Colonic mucosa (tissue), 4 donors: ENCODE measurements at regions of chr1 and their contacts with region 1.

Region 1: DNA sequence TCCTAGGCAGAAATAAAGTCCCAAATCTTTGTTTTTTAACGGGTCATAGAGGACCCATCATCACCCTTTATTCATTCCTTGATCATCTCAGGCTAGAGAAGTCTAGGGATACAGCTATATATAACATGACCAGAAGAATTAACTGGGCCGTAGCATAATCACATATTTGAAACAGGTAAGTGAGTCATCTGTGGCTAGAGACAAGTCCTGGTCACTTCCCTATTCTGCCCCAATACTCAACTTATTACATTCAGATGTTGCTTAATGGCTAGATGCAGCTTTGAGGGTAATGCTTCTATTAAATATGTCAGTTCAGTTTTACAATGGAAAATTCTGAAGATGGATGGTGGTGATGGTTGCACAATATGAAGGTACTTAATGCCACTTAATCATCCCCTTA is 47.0 kb downstream of the EXO1 start:
- DNase-seq: no peak
- H3K4me3 ChIP-seq: no peak overlapping the region
- H3K27ac ChIP-seq: no peak overlapping the region
- H3K4me1 ChIP-seq: no peaks in the 10 kb centered on the region
- H3K27me3 ChIP-seq: no peaks in the 10 kb centered on the region
- CTCF ChIP-seq: no peak

Region 2: GRCh38 chr1:242017584-242018233 is 122.7 kb after region 1 on chr1:
- intact Hi-C with region 1: loop called (anchors 5 kb)
- DNase-seq: peak; percentile 57
- H3K4me3 ChIP-seq: no peak overlapping the region
- H3K27ac ChIP-seq: no peak overlapping the region
- H3K4me1 ChIP-seq: no peaks in the 10 kb centered on the region
- H3K27me3 ChIP-seq: no peaks in the 10 kb centered on the region
- CTCF ChIP-seq: peak; percentile 55